Left colon (tissue), 2 donors: ENCODE measurements at regions of chr6 and their contacts with region 1.

Region 1: GRCh38 chr6:108782179-108783041 is 65.8 kb upstream of the ARMC2 start:
- DNase-seq: peak; percentile 87 to 90
- ATAC-seq: peak; percentile 100

Region 2: DNA sequence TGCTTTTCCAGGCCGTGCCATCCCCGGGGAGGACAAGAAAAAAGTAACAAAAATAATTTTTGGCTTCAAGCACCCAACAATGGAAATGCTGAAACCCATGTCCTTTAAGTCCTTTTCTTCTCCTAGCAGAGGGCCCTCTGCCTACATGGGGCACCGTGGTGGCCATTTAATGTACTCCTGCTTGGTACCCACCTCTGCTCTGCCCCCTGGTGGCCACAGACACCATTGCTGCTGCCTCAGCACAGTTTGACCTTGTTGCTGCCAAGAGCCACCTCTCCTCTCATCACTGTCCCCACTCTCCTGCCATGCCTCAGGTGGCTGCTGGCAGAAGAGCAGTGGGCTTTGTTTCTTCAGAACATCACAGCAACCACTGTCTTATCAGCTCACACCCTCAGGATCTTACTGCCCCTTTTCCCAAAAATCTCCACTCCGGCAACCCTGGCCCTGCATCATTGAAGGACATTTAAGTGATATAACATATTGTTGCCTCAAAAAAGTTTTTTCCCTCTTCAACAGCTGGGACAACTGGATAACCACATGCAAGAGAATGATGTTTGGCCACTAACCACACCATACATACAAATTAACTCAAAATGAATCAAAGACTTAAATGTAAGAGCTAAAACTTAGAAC is 52.9 kb after region 1 on chr6:
- intact Hi-C with region 1: loop called in 1 of 2 experiments (anchors 10 kb)
- DNase-seq: peak; percentile 83 to 93
- ATAC-seq: peak; percentile 99

Region 3: DNA sequence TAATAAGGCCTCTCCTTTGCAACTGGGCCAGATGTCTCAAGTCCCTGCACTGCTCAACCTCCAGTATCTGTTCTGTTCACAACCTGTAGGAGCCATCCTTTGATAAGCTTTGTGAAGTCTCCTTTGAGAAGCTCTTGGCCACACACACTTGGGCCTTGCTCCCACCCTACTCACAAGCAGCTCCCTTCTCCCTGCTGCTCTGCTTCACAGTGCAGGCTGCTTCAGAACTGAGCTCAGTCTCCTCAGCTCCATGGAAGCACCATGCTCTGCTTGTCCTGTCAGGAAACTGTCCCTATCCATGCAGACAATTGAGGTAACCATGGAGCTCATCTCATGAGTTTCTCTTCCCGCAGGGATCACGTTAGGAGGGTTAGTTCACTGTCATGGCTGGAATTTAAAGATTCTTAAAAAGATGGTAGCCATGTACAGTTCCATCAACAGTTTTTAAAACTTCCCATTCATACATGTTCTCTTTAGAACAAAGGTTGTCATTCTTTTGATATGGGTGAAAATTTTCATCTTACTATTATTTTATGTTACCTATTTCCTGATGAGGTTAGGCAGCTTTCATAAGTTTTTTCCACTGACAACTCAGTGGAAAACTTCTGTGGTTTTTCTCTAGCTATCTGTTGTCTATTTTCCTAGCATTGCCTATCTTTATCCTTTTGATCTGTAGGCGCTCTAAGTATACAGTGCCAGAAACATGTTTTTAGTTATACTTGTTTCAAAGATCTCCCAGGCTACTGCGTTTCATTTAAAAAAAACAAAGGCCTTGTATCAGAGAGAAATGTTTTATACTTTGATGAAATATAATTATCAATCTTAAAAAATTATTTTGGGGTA is 846.0 kb after region 1 on chr6:
- intact Hi-C with region 1: no loop called
- DNase-seq: no peak
- ATAC-seq: no peak